Caco-2 (cell line): ENCODE measurements at regions of chr5 and their contacts with region 1.

Region 1: DNA sequence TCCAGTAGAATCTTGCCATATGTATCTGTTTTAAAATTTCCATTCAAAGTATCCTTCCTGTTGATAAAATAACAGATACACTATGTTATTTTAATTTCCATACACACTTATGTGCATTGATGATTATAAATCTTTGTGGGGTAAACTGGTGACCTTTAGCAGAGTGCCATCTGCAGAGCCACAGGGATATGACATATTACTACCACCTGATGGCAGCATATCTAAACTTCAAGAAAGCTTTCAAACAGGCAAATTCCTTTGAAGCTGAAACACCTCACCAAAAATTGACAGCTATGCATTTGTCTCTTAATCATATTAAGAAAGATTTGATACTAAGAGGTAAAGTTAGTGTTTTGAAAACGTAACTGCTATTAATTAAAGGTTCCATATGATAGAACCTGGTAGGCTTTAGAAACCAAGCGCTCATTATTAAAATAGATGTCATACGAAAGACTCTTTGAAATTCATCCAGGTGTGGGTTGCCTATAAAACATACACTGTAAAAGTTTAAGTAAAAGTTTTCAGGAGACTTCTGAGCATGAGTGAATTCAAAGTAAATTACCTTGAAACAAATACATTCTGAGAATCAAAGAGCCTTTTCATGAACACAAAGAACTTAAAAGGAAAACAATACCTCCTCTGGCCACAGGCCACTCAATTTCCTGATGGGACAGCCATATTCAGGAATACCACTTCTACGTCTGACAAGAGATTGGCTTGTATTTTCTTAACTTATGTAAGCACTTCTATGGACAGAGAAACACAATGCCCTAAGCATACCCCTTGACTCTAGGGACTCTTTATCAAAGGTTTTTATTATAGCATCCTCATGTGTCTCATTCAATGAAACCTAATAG is 93.3 kb downstream of the KIAA0825 start:
- DNase-seq: peak in 1 of 2 experiments; percentile 30
- H3K4me3 ChIP-seq: no peak overlapping the region
- H3K4me3 Mint-ChIP-seq: no peak overlapping the region
- H3K27ac Mint-ChIP-seq: no peak overlapping the region
- H3K4me1 ChIP-seq: no peaks in the 10 kb centered on the region
- H3K4me1 Mint-ChIP-seq: peaks cover 13% of the 10 kb centered on the region
- H3K27me3 ChIP-seq: no peaks in the 10 kb centered on the region
- H3K27me3 Mint-ChIP-seq: no peaks in the 10 kb centered on the region
- CTCF ChIP-seq: peak; percentile 63 to 76

Region 2: DNA sequence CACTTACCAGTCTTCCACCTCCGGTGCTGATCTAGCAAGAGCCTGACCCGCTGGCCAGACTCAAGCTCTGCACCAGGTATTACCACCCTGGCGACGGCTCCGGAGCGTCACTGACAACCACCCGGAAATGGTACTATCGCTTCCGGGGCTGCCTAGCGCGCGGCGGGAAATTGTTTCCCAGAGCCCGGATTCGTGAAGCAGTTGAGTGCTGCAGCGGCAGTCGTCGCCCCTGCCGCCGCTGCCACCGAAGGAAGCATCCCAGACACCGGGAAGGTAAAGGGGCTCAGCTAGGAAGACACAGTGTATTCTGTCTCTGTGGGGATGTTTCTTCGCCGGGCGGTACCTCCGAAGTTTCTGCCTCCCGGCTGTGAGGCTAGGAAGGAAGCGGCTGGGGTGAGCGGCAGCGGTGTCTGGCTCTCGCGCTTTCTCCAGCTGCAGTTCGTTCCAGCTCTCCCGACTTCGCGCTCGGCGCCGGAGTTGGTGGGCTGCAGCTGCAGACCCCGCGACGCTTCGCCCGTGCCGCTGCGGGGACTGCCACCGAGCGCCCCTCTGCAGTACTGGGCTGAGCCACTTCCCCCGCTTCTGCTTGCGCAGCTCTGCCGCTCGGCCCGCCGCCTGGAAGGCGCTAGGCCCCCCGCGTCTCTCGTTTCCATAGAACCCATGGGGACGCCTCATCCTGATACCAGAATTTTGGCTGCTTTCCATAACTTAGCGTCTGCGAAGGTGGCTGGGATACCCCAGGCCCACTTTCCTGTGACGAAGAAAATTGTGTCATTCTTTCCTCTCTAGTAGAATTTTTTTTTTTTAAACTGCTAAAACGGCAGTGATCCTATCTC is 93.6 kb after region 1 on chr5 and contains the starts of genes KIAA0825 and SLF1:
- CTCF ChIA-PET with region 1: interaction called, 9 read pairs
- POLR2A ChIA-PET with region 1: no interaction called
- intact Hi-C with region 1: loop called (anchors 2 kb)
- DNase-seq: peak; percentile 89
- H3K4me3 ChIP-seq: peak within 1 kb of the TSS; percentile 82
- H3K4me3 Mint-ChIP-seq: peak within 1 kb of the TSS; percentile 82
- H3K27ac Mint-ChIP-seq: peak within 1 kb of the TSS; percentile 96
- H3K4me1 ChIP-seq: peaks cover 10% of the 10 kb centered on the region; the same call in 1 of the 2 replicates
- H3K4me1 Mint-ChIP-seq: no peaks in the 10 kb centered on the region
- H3K27me3 ChIP-seq: no peaks in the 10 kb centered on the region
- H3K27me3 Mint-ChIP-seq: no peaks in the 10 kb centered on the region
- CTCF ChIP-seq: no peak
- total RNA-seq, gene KIAA0825: 0.26 and 0.50 TPM in 2 replicates
- total RNA-seq, gene SLF1: 7.9 and 11.7 TPM in 2 replicates

Region 3: DNA sequence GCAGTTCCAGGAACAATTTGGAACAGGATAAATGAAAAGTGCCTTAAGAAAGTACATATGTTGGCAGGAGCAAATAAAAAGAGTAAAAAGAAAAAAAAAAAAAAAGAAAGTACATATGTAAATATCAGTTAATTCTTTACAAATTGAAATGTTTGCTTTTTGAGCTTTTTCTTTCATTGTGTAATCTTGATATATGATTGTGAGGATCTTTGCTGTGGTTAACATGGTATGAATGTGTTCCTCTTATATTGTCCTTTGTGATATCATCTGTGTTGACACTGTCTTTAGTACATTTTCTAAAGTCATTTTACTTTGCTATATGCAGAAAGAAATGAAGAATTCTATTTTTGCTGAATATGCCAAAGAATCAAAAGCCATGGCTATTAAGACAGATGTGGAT is 129.2 kb after region 1 on chr5:
- CTCF ChIA-PET with region 1: no interaction called
- POLR2A ChIA-PET with region 1: no interaction called
- intact Hi-C with region 1: no loop called
- DNase-seq: no peak
- H3K4me3 ChIP-seq: no peak overlapping the region
- H3K4me3 Mint-ChIP-seq: no peak overlapping the region
- H3K27ac Mint-ChIP-seq: no peak overlapping the region
- H3K4me1 ChIP-seq: no peaks in the 10 kb centered on the region
- H3K4me1 Mint-ChIP-seq: no peaks in the 10 kb centered on the region
- H3K27me3 ChIP-seq: no peaks in the 10 kb centered on the region
- H3K27me3 Mint-ChIP-seq: no peaks in the 10 kb centered on the region
- CTCF ChIP-seq: no peak

Region 4: DNA sequence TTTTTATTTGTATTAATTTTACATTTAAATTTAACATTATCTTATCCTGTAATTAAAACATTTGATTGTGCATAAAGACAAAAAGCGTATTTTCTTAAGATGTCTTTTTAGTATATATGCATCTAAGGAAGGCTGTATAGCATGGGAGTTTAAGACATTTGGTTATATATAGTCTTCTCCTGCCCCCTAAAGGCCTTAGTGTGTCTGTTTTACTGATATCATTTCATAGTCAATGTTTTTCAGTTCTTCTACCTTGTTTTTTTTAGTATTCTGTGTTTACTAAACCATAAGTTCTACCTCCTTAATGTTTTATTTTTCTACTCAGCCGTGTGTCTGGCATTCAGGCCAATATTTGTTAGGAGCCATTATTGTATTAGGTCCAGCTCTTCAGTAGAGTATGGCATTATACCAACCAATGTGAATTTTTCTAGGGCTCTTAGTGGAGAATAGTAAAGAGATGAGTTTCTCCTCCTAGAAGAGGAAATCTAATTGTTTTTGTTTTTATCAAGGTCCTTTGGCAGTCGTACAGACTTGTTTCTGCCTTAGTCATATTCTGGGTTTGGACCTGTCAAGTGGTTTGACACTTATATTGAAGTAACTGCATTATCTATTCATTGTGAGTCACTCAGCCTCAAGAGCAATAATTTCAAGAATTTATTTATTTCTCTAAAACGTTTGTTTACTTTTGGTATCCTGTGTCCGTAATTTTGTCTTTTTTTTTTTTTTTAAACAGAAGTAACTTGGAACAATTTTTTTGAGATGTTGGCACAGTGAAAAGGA is 168.2 kb after region 1 on chr5:
- CTCF ChIA-PET with region 1: interaction called, 7 read pairs
- POLR2A ChIA-PET with region 1: no interaction called
- intact Hi-C with region 1: loop called (anchors 1 kb)
- DNase-seq: peak in 1 of 2 experiments; percentile 19
- H3K4me3 ChIP-seq: no peak overlapping the region
- H3K4me3 Mint-ChIP-seq: no peak overlapping the region
- H3K27ac Mint-ChIP-seq: no peak overlapping the region
- H3K4me1 ChIP-seq: no peaks in the 10 kb centered on the region
- H3K4me1 Mint-ChIP-seq: no peaks in the 10 kb centered on the region
- H3K27me3 ChIP-seq: no peaks in the 10 kb centered on the region
- H3K27me3 Mint-ChIP-seq: no peaks in the 10 kb centered on the region
- CTCF ChIP-seq: peak; percentile 38 to 49

Region 5: DNA sequence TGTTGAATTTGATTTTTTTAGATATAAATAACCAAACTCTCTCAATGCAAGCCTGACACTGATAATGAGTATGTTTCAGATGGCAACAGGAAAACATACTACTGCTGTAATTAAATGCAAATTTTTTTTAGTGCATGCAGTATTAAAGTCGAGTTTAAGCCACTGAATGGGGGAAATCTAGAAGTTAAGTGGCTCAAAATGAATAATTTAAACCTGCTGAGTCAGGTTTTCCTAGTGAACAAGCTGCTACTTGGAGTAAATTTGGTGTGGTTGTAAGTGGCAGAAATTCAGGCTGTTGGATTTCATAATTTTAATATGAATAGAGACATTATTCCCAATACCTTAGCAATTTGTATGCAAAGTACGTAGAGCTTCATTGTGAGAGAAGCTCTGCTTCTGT is 215.2 kb after region 1 on chr5:
- CTCF ChIA-PET with region 1: interaction called, 34 read pairs
- POLR2A ChIA-PET with region 1: no interaction called
- intact Hi-C with region 1: loop called (anchors 1 kb)
- DNase-seq: no peak
- H3K4me3 ChIP-seq: no peak overlapping the region
- H3K4me3 Mint-ChIP-seq: no peak overlapping the region
- H3K27ac Mint-ChIP-seq: no peak overlapping the region
- H3K4me1 ChIP-seq: no peaks in the 10 kb centered on the region
- H3K4me1 Mint-ChIP-seq: peaks cover 6% of the 10 kb centered on the region
- H3K27me3 ChIP-seq: no peaks in the 10 kb centered on the region
- H3K27me3 Mint-ChIP-seq: peaks cover 3% of the 10 kb centered on the region
- CTCF ChIP-seq: no peak

Region 6: DNA sequence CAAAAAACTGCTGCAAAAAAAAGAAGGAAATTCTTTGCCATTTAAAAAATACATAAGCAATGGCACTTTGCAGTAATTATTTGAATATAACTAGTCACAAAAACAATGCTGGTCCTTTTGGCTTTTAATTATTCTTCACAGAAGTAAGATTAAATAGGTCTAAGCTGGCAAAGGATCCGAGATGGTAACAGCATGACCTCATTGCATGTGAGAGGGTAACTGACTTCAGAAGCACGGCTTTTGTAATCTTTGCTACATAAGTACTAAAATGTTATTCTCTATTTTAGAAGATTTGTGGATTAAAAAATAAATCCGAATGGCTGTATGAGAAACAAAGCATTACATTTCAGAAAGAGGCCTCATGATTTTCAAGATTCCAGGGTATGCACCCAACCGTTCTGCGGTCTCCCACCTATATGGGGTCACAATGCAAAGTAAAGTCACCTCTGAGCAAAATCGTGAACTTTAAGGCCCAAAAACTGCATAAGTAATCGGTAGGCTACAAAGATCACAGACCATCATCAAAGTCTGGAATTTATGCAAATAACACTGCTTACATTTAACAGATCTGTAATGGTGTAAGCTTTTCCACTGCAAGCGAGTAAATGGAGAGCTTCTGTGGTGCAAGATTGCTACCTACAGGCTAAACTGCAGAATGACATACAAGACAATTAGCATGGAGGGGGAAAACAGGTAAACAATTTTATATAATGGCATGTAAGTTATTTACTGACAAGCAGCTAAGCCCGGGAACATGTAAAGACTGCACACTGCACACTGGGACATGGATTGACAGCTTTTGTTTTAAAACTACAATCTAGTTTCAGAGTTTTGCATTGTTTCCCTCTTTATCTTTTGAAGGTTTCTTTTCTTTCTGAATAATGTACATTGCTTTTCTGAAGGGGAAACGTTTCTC is 325.0 kb after region 1 on chr5:
- CTCF ChIA-PET with region 1: interaction called, 9 read pairs
- POLR2A ChIA-PET with region 1: no interaction called
- intact Hi-C with region 1: loop called (anchors 1 kb)
- DNase-seq: peak in 1 of 2 experiments; percentile 44
- H3K4me3 ChIP-seq: no peak overlapping the region
- H3K4me3 Mint-ChIP-seq: no peak overlapping the region
- H3K27ac Mint-ChIP-seq: no peak overlapping the region
- H3K4me1 ChIP-seq: peaks cover 4% of the 10 kb centered on the region; the same call in 1 of the 2 replicates
- H3K4me1 Mint-ChIP-seq: no peaks in the 10 kb centered on the region
- H3K27me3 ChIP-seq: no peaks in the 10 kb centered on the region
- H3K27me3 Mint-ChIP-seq: peaks cover 15% of the 10 kb centered on the region
- CTCF ChIP-seq: peak; percentile 65 to 74

Region 7: GRCh38 chr5:94908889-94909480 is 383.9 kb after region 1 on chr5:
- CTCF ChIA-PET with region 1: no interaction called
- POLR2A ChIA-PET with region 1: no interaction called
- intact Hi-C with region 1: loop called (anchors 2 kb)
- DNase-seq: peak in 1 of 2 experiments; percentile 50
- H3K4me3 ChIP-seq: no peak overlapping the region
- H3K4me3 Mint-ChIP-seq: no peak overlapping the region
- H3K27ac Mint-ChIP-seq: no peak overlapping the region
- H3K4me1 ChIP-seq: no peaks in the 10 kb centered on the region
- H3K4me1 Mint-ChIP-seq: no peaks in the 10 kb centered on the region
- H3K27me3 ChIP-seq: no peaks in the 10 kb centered on the region
- H3K27me3 Mint-ChIP-seq: peaks cover 3% of the 10 kb centered on the region
- CTCF ChIP-seq: peak; percentile 64 to 70